ENCODE measurements at regions of chr7 and their contacts with region 1.

Region 1: GRCh38 chr7:100407285-100408180 is 21.0 kb downstream of the ZCWPW1 start:
- DNase-seq: peak; percentile 69 to 85 (median 75)
- ATAC-seq: peak; percentile 96
- H3K4me3 ChIP-seq: no peak overlapping the region
- H3K27ac ChIP-seq: no peak overlapping the region
- H3K4me1 ChIP-seq: peaks cover 4 to 5% of the 10 kb centered on the region in 2 experiments; a peak in 1 of 5 replicates
- H3K27me3 ChIP-seq: peaks cover 24 to 33% of the 10 kb centered on the region in 2 experiments
- CTCF ChIP-seq: peak; percentile 74 to 92 (median 86)
- EP300 ChIP-seq: peak; percentile 35; the same call in 1 of the 2 replicates
- POLR2A ChIP-seq: no peak
- RAD21 ChIP-seq: peak; percentile 56 to 79

Region 2: DNA sequence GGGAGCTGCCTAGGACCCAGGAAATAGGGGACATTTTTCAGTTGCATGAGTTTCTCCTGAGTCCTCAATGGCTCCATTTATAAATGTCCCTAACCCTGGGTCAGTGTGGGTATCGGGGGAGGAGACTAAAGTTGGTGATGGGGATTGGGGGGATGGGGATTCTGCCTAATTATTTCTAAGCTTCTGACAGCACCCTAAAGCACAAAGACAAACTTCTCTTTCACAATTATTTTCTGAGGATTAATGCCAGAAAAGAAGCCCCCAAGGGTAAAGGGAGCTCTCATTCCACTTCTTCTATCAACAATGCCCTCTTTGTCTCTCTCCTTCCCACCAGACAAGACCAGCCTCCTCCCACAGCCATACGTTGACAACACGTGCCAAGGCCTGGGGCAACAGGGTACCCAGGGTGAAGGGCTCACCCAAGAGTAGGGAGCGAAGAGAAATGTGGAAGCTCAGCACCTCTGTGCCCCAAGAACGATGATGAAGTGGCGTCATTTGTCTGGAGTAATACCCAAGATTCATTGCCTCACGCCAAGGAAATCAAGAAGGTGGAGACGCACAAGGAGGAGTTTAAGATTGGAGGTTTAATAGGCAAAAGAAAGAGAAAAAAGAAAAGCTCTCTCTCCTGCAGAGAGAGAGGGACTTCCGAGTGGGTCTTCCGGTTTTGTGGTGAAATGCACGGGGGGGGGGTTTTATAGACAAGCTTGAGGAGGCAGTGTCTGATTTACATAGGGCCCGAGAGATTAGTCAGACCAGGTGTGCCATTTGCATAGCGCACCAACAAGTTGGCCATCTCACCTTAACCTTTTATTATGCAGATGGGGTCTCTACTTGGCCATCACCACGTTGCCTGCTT is 463.7 kb before region 1 on chr7:
- CTCF ChIA-PET with region 1: no interaction called
- POLR2A ChIA-PET with region 1: no interaction called
- in situ Hi-C with region 1: no loop called
- intact Hi-C with region 1: no loop called
- DNase-seq: no peak
- ATAC-seq: no peak
- H3K4me3 ChIP-seq: peak overlapping the region; percentile 10; the same call in 1 of the 2 replicates
- H3K27ac ChIP-seq: no peak overlapping the region
- H3K4me1 ChIP-seq: no peaks in the 10 kb centered on the region; a peak in 1 of 5 replicates
- H3K27me3 ChIP-seq: peaks cover 0 to 4% of the 10 kb centered on the region in 2 experiments; a peak in 1 of 5 replicates
- CTCF ChIP-seq: no peak
- EP300 ChIP-seq: no peak
- POLR2A ChIP-seq: no peak
- RAD21 ChIP-seq: no peak

Region 3: DNA sequence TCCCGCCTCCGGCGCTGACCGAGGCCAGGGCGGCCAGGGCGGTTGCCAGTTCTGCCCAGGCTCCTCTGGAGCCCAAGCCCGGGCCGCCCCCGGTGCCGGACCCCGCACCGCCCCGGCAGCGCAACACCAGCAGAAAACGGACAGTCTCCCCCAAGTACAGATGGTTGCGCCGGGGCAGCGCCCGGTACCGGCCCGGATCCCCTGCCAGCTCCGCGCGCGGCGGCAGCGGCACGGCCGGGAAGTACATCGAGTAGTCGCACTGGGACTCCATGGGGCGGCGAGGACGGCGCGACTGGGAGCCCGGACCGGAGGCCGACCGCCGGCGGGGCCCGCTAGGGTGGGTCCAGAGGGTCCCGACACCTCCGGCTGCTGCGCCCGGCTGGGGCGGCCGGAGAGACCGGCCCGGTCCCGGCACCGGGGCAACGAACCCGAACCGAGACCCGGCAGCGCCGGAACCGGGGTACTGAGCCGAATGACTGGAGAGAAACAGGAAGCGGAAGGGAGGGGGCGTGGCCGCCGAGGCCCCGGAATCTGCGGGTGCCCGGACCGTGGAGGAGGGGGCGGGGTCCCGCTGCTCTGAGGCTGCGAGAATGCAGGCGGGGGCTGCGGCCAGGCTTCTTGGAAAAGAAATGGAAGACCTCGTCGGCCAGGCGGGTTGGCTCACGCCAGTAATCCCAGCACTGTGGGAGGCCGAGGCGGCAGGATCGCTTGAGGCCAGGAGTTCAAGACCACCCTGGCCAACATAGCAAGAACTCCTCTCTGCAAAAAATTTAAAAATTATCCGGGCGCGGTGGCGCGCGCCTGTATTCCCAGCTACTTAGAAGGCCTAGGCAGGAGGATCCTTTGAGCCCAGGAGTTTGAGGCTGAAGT is 249.1 kb before region 1 on chr7 and contains the start of gene TRAPPC14:
- CTCF ChIA-PET with region 1: no interaction called
- POLR2A ChIA-PET with region 1: no interaction called
- in situ Hi-C with region 1: no loop called
- intact Hi-C with region 1: no loop called
- DNase-seq: peak; percentile 97 to 100 (median 98)
- ATAC-seq: peak; percentile 87
- H3K4me3 ChIP-seq: peak within 1 kb of the TSS; percentile 99
- H3K27ac ChIP-seq: peak within 1 kb of the TSS; percentile 91
- H3K4me1 ChIP-seq: peaks cover 35 to 74% of the 10 kb centered on the region in 2 experiments
- H3K27me3 ChIP-seq: no peaks in the 10 kb centered on the region
- CTCF ChIP-seq: no peak
- EP300 ChIP-seq: peak; percentile 55; the same call in 1 of the 2 replicates
- POLR2A ChIP-seq: peak; percentile 90
- RAD21 ChIP-seq: peak in 1 of 2 experiments; percentile 8; a peak in 1 of 4 replicates
- polyA plus RNA-seq, gene TRAPPC14: 0.42 to 0.55 TPM

Region 4: GRCh38 chr7:100372256-100372655 is 35.3 kb before region 1 on chr7:
- CTCF ChIA-PET with region 1: no interaction called
- POLR2A ChIA-PET with region 1: no interaction called
- in situ Hi-C with region 1: no loop called
- intact Hi-C with region 1: loop called (anchors 5 kb)
- DNase-seq: no peak
- ATAC-seq: peak; percentile 7
- H3K4me3 ChIP-seq: no peak overlapping the region
- H3K27ac ChIP-seq: 0 out of 3 replicates have a peak overlapping the region, but pooled peaks have one; percentile 22
- H3K4me1 ChIP-seq: peaks cover 4 to 43% of the 10 kb centered on the region in 2 experiments; a peak in 4 of 5 replicates
- H3K27me3 ChIP-seq: no peaks in the 10 kb centered on the region
- CTCF ChIP-seq: no peak
- EP300 ChIP-seq: no peak
- POLR2A ChIP-seq: no peak; the same call in 1 of the 2 replicates
- RAD21 ChIP-seq: no peak

Region 5: GRCh38 chr7:100719523-100720319 is 312.2 kb after region 1 on chr7:
- CTCF ChIA-PET with region 1: no interaction called
- POLR2A ChIA-PET with region 1: no interaction called
- in situ Hi-C with region 1: no loop called
- intact Hi-C with region 1: loop called (anchors 10 kb)
- DNase-seq: no peak
- ATAC-seq: no peak
- H3K4me3 ChIP-seq: no peak overlapping the region
- H3K27ac ChIP-seq: no peak overlapping the region
- H3K4me1 ChIP-seq: peaks cover 6 to 26% of the 10 kb centered on the region in 2 experiments; a peak in 3 of 5 replicates
- H3K27me3 ChIP-seq: peaks cover 10 to 25% of the 10 kb centered on the region in 2 experiments
- CTCF ChIP-seq: no peak
- EP300 ChIP-seq: no peak
- POLR2A ChIP-seq: no peak
- RAD21 ChIP-seq: no peak

Measured in K562 (cell line).